Right lobe of liver (tissue), 6 donors: ENCODE measurements at regions of chr1 and their contacts with region 1.

Region 1: GRCh38 chr1:205528887-205529825 is 24.7 kb downstream of the CDK18 start:
- DNase-seq: peak; percentile 74 to 82 (median 80)
- ATAC-seq: peak; percentile 67 to 86 (median 73)
- H3K4me3 ChIP-seq: no peak overlapping the region
- H3K27ac ChIP-seq: no peak overlapping the region
- H3K4me1 ChIP-seq: no peaks in the 10 kb centered on the region
- H3K27me3 ChIP-seq: no peaks in the 10 kb centered on the region
- CTCF ChIP-seq: peak; percentile 83 to 97 (median 93)
- POLR2A ChIP-seq: no peak

Region 2: GRCh38 chr1:205335643-205336091 is 193.5 kb before region 1 on chr1:
- intact Hi-C with region 1: loop called in 1 of 2 experiments (anchors 10 kb)
- DNase-seq: peak; percentile 84 to 87 (median 86)
- ATAC-seq: peak; percentile 95 to 99 (median 96)
- H3K4me3 ChIP-seq: no peak overlapping the region
- H3K27ac ChIP-seq: no peak overlapping the region
- H3K4me1 ChIP-seq: no peaks in the 10 kb centered on the region
- H3K27me3 ChIP-seq: no peaks in the 10 kb centered on the region
- CTCF ChIP-seq: peak; percentile 76 to 99 (median 98)
- POLR2A ChIP-seq: no peak

Region 3: GRCh38 chr1:205472737-205473441 is 56.3 kb before region 1 on chr1:
- intact Hi-C with region 1: no loop called
- DNase-seq: no peak
- ATAC-seq: no peak
- H3K4me3 ChIP-seq: no peak overlapping the region
- H3K27ac ChIP-seq: no peak overlapping the region
- H3K4me1 ChIP-seq: no peaks in the 10 kb centered on the region
- H3K27me3 ChIP-seq: no peaks in the 10 kb centered on the region
- CTCF ChIP-seq: no peak
- POLR2A ChIP-seq: no peak

Region 4: DNA sequence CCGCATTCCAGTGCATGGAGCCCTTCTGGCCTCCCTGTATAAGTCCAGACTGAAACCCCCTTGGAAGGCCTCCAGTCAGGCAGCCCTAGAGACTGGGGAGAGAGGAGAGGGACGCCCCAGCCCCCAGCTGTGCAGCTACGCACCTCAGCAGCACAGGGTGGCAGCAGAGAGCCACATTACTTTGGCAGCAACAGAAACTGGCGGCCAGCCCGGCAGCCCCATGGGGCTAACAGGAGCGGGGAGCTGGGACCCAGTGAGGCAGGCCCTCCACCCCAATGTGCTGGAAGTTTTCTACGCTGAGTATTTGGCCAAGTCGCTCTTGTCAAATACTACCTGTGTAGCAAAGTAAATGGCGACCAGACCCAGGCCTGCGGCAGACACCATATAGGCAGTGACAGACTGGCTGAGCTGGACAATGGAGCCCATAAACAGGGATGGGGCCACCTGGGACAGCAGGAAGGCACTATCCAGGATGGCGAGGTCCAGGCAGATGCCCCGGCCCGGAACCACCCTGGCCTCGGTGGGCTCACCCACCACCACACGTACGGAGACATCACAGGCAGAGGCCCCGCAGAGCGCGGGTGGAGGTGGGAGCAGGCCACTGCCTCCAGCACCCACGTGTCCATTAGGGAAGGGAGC is 129.9 kb after region 1 on chr1:
- intact Hi-C with region 1: loop called in 1 of 2 experiments (anchors 5 kb)
- DNase-seq: peak; percentile 83 to 86 (median 83)
- ATAC-seq: peak; percentile 83 to 85 (median 84)
- H3K4me3 ChIP-seq: no peak overlapping the region
- H3K27ac ChIP-seq: peak overlapping the region in 1 of 3 donors; percentile 33
- H3K4me1 ChIP-seq: peaks cover 0 to 49% (median 7%) of the 10 kb centered on the region in 4 donors
- H3K27me3 ChIP-seq: no peaks in the 10 kb centered on the region
- CTCF ChIP-seq: peak; percentile 89 to 95 (median 90)
- POLR2A ChIP-seq: no peak

Region 5: DNA sequence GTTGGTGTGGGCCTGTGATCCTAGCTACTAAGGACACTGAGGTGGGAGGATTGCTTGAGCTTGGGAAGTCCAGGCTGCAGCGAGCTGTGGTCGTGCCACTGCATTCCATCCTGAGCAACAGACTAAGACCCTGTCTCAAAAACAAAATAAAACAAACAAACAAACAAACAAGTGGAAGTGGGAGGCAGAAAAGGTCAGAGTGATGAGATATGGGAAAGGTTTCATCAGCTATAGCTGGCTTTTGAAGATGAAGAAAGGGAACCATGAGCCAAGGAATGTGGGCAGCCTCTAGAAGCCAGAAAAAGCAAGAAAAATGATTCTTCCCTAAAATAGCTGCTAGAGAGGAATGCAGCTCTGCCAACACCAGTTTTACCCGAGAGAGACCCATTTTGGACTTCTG is 231.4 kb after region 1 on chr1:
- intact Hi-C with region 1: no loop called
- DNase-seq: no peak
- ATAC-seq: no peak
- H3K4me3 ChIP-seq: no peak overlapping the region
- H3K27ac ChIP-seq: no peak overlapping the region
- H3K4me1 ChIP-seq: no peaks in the 10 kb centered on the region
- H3K27me3 ChIP-seq: no peaks in the 10 kb centered on the region
- CTCF ChIP-seq: no peak
- POLR2A ChIP-seq: no peak